ENCODE measurements at regions of chr10 and their contacts with region 1.

Region 1: GRCh38 chr10:102394079-102394800 is 1.3 kb upstream of the NFKB2 start:
- DNase-seq: peak; percentile 95
- ATAC-seq: peak; percentile 88
- H3K4me3 ChIP-seq: peak overlapping the region; percentile 75 to 92
- H3K27ac ChIP-seq: peak overlapping the region; percentile 77
- H3K4me1 ChIP-seq: peaks cover 16 to 58% of the 10 kb centered on the region in 2 experiments
- H3K27me3 ChIP-seq: no peaks in the 10 kb centered on the region
- CTCF ChIP-seq: no peak; a peak in 1 of 6 replicates
- POLR2A ChIP-seq: no peak
- RAD21 ChIP-seq: no peak

Region 2: DNA sequence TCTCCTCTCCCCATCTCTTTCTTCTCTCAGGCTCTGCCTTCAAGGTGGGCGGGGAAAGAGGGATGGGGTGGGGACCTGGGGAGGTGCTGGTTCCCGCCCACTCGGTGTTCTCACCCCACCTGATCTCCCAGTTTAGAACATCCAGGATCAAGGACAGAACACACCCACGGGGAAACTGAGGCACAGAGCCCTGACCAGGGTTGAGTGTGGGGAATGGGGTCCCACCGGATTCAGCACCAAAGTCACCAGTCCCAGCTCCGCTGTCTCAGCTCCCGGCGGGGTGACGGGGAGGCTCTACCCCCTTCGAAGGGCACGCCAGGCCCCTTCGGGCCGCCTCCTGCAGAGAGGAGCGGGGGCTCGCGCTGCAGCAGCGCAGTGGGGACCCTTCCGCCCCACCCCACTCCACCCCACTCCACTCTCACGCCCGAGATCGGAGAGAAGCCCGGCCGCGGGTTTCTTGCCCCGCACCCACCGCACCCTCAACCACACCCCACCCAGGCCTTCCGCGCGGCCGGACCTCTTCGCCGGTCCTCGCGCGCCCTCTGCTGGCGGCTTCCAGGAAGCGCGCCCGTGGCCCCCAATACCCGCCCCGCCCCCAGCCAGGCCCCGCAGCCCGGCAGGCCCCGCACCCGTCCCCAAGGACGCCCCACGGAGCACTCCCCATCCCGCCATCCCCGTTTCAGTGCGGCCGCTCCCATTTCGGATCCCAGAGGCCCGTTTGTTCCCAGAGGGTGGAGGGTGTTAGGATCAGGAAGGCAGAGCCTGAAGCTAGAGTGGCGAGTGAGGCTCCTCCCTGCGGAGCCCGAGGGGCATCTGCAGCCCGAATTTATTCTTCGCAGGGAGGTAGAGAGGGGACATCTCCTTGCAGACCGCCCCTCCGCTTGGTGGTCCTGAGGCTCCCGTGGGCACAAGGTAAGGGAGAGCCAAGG is 824.1 kb before region 1 on chr10:
- CTCF ChIA-PET with region 1: no interaction called
- POLR2A ChIA-PET with region 1: no interaction called
- RAD21 ChIA-PET with region 1: no interaction called
- intact Hi-C with region 1: no loop called
- DNase-seq: peak; percentile 65
- ATAC-seq: peak; percentile 89
- H3K4me3 ChIP-seq: peak overlapping the region; percentile 62 to 66
- H3K27ac ChIP-seq: peak overlapping the region; percentile 48; the same call in 1 of the 2 replicates
- H3K4me1 ChIP-seq: peaks cover 11 to 22% of the 10 kb centered on the region in 2 experiments
- H3K27me3 ChIP-seq: no peaks in the 10 kb centered on the region
- CTCF ChIP-seq: peak in 2 of 3 experiments; percentile 82 to 87; a peak in 4 of 6 replicates
- POLR2A ChIP-seq: peak; percentile 11
- RAD21 ChIP-seq: no peak

Region 3: GRCh38 chr10:102167861-102168260 is 226.4 kb before region 1 on chr10:
- CTCF ChIA-PET with region 1: interaction called, 17 read pairs
- POLR2A ChIA-PET with region 1: interaction called, 6 read pairs
- RAD21 ChIA-PET with region 1: interaction called in 1 of 2 experiments, 3 read pairs
- intact Hi-C with region 1: loop called (anchors 1 kb)
- DNase-seq: no peak
- ATAC-seq: no peak
- H3K4me3 ChIP-seq: no peak overlapping the region
- H3K27ac ChIP-seq: no peak overlapping the region
- H3K4me1 ChIP-seq: peaks cover 4 to 6% of the 10 kb centered on the region in 2 experiments; a peak in 2 of 4 replicates
- H3K27me3 ChIP-seq: no peaks in the 10 kb centered on the region
- CTCF ChIP-seq: no peak
- POLR2A ChIP-seq: no peak
- RAD21 ChIP-seq: no peak

Region 4: DNA sequence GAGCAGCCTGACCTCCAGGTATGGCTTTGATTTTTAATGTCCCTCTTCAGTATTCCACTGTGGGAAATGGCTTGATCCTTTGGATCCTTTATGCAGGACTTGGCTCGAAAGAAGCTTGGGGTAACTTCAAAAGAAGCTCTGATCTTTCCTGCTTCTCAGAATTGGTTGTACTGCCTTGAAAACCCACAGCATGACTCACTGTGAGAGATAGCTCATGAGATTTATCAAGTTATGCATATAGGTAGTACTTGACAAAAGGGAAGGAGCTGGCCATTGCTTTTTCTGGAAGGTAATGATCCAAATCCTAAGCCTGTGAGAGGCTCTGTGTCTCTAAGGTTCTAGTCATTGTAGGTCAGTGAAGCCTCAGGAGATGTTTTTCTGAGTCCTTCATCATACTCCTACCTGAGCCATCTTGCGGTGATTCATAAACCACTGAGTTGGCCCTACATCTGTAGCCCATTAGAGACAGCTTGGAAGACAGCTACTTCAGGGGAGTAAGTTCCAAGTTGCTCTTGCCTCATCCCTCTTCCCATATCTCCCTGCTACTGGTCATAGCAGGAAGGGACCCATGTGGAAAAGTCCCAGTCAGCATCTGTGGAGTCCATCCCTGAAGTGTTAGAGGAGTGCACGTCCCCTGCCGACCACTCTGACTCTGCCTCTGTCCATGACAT is 35.4 kb before region 1 on chr10:
- CTCF ChIA-PET with region 1: no interaction called
- POLR2A ChIA-PET with region 1: no interaction called
- RAD21 ChIA-PET with region 1: no interaction called
- intact Hi-C with region 1: no loop called
- DNase-seq: no peak
- ATAC-seq: no peak
- H3K4me3 ChIP-seq: no peak overlapping the region
- H3K27ac ChIP-seq: no peak overlapping the region
- H3K4me1 ChIP-seq: no peaks in the 10 kb centered on the region
- H3K27me3 ChIP-seq: no peaks in the 10 kb centered on the region
- CTCF ChIP-seq: no peak
- POLR2A ChIP-seq: no peak
- RAD21 ChIP-seq: no peak

Region 5: DNA sequence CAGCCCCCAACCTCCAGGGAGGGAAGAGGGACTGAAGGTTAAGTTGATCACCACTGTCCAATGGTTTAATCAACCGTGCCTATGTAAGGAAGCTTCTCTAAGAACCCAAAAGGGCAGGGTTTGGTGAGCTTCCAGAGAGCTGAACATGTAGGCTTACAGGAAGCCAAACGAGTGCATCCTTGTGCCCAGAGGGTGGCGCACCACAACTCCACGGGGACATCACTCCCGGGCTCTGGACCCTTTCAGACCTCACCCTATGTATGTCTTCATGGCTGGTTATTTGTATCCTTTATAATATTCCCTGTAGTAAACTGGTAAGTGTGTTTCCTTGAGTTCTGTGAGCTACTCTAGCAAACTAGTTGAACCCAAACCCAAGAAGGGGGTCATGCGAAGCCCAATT is 10.2 kb before region 1 on chr10:
- CTCF ChIA-PET with region 1: interaction called, 26 read pairs
- POLR2A ChIA-PET with region 1: interaction called, 3 read pairs
- RAD21 ChIA-PET with region 1: interaction called in 1 of 2 experiments, 5 read pairs
- intact Hi-C with region 1: no loop called
- DNase-seq: no peak
- ATAC-seq: peak; percentile 74
- H3K4me3 ChIP-seq: no peak overlapping the region
- H3K27ac ChIP-seq: no peak overlapping the region
- H3K4me1 ChIP-seq: no peaks in the 10 kb centered on the region
- H3K27me3 ChIP-seq: no peaks in the 10 kb centered on the region
- CTCF ChIP-seq: peak; percentile 34 to 61 (median 45); a peak in 5 of 6 replicates
- POLR2A ChIP-seq: no peak
- RAD21 ChIP-seq: peak; percentile 46

Region 6: GRCh38 chr10:102408728-102409603 is 14.7 kb after region 1 on chr10:
- CTCF ChIA-PET with region 1: interaction called, 24 read pairs
- POLR2A ChIA-PET with region 1: interaction called, 14 read pairs
- RAD21 ChIA-PET with region 1: no interaction called
- intact Hi-C with region 1: no loop called
- DNase-seq: no peak
- ATAC-seq: peak; percentile 78
- H3K4me3 ChIP-seq: peak overlapping the region; percentile 56 to 74
- H3K27ac ChIP-seq: peak overlapping the region; percentile 50; the same call in 1 of the 2 replicates
- H3K4me1 ChIP-seq: peaks cover 11 to 21% of the 10 kb centered on the region in 2 experiments
- H3K27me3 ChIP-seq: peaks cover 3% of the 10 kb centered on the region; the same call in 1 of the 2 replicates
- CTCF ChIP-seq: no peak
- POLR2A ChIP-seq: no peak
- RAD21 ChIP-seq: no peak

Region 7: GRCh38 chr10:102450194-102450938 is 56.1 kb after region 1 on chr10:
- CTCF ChIA-PET with region 1: interaction called, 3 read pairs
- POLR2A ChIA-PET with region 1: interaction called, 5 read pairs
- RAD21 ChIA-PET with region 1: no interaction called
- intact Hi-C with region 1: loop called (anchors 2 kb)
- DNase-seq: peak; percentile 82
- ATAC-seq: peak; percentile 76
- H3K4me3 ChIP-seq: peak overlapping the region; percentile 72 to 100
- H3K27ac ChIP-seq: peak overlapping the region; percentile 98
- H3K4me1 ChIP-seq: peaks cover 28 to 38% of the 10 kb centered on the region in 2 experiments
- H3K27me3 ChIP-seq: no peaks in the 10 kb centered on the region
- CTCF ChIP-seq: no peak
- POLR2A ChIP-seq: peak; percentile 94
- RAD21 ChIP-seq: no peak

Region 8: GRCh38 chr10:102476466-102477141 is 82.4 kb after region 1 on chr10:
- CTCF ChIA-PET with region 1: interaction called, 19 read pairs
- POLR2A ChIA-PET with region 1: interaction called, 3 read pairs
- RAD21 ChIA-PET with region 1: no interaction called
- intact Hi-C with region 1: loop called (anchors 1 kb)
- DNase-seq: no peak
- ATAC-seq: no peak
- H3K4me3 ChIP-seq: no peak overlapping the region
- H3K27ac ChIP-seq: no peak overlapping the region
- H3K4me1 ChIP-seq: no peaks in the 10 kb centered on the region
- H3K27me3 ChIP-seq: no peaks in the 10 kb centered on the region
- CTCF ChIP-seq: no peak
- POLR2A ChIP-seq: no peak
- RAD21 ChIP-seq: no peak

Region 9: DNA sequence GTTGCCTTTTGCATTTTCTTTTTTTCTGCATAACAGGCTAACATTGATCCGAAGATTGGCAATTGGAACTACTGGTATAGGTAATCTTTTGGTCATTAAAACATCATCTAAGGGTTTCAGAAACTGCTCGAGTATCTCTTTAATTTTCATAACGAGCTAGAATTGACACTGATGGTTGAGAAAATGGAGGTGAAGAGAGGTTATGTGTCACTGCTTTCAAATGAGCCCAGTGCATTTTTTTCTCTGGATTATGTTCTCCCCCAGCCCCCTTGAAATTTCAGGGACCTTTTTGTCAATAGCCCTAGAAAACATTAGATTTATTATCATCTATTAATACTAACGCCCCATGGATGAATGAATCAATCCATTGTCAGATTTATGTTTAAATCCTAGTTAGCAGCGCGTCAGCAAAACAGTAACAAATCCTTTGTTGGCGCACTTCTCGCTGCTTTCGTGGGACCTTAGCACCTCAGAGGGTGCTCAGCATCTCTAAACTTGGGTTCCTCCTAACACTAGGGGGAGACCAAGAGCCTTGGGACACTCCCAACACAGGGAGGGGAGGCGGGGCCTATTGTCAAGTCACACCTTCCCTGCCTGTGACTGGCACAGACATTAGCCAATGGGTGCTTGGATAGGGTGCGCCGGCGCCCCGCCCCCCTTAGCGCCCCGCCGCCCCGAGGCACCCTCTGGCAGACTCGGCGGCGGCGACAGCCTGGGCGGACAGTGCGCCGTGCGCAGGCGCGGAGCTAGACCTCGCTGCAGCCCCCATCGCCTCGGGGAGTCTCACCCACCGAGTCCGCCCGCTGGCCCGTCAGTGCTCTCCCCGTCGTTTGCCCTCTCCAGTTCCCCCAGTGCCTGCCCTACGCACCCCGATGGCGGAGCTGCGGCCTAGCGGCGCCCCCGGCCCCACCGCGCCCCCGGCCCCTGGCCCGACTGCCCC is 109.3 kb after region 1 on chr10 and contains the start of gene SUFU:
- CTCF ChIA-PET with region 1: interaction called, 3 read pairs
- POLR2A ChIA-PET with region 1: interaction called, 3 read pairs
- RAD21 ChIA-PET with region 1: no interaction called
- intact Hi-C with region 1: loop called (anchors 1 kb)
- DNase-seq: peak; percentile 100
- ATAC-seq: peak; percentile 72
- H3K4me3 ChIP-seq: peak within 1 kb of the TSS; percentile 83 to 89
- H3K27ac ChIP-seq: peak within 1 kb of the TSS; percentile 59
- H3K4me1 ChIP-seq: peaks cover 13 to 27% of the 10 kb centered on the region in 2 experiments
- H3K27me3 ChIP-seq: no peaks in the 10 kb centered on the region
- CTCF ChIP-seq: peak in 2 of 3 experiments; percentile 94 to 99; a peak in 4 of 6 replicates
- POLR2A ChIP-seq: peak; percentile 53
- RAD21 ChIP-seq: no peak
- total RNA-seq, gene SUFU: 18.8 TPM

Measured in HCT116 (cell line).